Esophagus muscularis mucosa (tissue), 4 donors: ENCODE measurements at regions of chr2 and their contacts with region 1.

Region 1: DNA sequence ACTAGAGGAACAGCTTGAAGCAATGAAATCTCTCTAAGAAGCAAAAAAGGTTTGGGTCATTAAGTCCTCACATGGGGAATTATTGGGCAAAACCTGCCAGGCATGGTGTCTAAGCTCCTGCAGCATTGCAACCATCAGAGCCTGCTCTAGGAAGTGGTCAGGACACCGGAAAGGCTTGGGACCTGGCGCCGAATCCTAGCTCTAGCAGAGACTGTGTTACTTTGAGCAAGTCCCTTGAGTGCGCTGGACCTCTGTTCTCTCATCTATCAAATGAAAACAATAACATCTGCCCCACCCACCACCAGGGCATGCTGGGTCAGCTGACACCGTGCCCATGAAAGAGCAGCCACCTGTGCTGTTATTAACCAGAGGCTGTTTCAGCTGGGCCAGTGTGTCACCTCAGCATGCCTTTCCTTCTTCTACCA is 6.3 kb downstream of the TMEM127 start:
- DNase-seq: no peak
- H3K4me3 ChIP-seq: peak overlapping the region in 1 of 4 donors; percentile 15
- H3K27ac ChIP-seq: peak overlapping the region; percentile 79 to 85 (median 81)
- H3K4me1 ChIP-seq: peaks cover 91 to 99% (median 92%) of the 10 kb centered on the region in 4 donors
- H3K27me3 ChIP-seq: no peaks in the 10 kb centered on the region
- CTCF ChIP-seq: no peak
- EP300 ChIP-seq: no peak
- POLR2A ChIP-seq: no peak

Region 2: DNA sequence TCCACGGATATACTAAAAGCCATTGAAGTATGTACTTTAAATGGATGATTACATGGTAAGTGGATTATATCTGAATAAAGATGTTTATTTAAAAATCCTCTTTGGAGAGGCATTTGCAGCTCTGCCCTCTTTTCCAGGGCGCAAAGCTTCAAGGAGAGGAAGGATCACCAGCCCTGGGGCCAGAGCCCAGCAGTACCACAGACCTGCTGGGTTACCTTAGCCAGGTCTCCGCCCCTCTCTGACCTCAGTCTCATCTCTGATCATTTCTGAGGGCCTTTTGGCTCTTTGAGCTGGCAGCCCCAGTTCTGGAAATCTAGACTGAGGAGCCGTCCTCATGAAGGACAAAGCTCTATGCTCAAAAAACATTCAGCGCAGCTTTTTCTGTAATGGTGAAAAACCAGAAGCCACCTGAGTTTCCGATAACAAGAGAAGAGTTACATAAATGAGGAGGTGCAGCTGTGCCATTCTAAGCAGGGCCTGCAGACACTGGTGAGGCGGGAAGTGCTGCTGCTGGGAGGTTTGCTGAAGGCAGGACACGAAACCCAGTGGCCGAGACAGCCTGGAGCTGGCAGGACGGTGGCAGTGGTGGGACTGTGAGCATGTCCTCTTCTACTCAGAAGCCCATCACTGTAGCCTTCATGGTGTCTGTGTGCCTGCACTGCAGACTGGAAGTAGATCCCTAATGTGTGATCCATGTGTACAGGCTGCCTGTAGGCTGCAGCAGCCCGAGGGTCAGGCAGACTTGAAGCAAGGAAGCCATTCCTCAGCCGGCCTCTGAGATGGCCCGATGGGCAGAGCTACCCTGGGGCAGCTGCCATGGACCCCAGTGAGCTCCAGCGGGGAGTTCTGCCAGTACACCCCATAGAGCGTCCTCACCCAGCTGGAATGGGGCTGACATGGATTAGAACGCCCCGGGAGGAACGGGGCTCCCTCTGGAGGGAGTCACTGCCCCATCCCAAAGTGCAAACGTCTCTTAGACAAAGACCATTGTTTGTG is 170.9 kb before region 1 on chr2:
- intact Hi-C with region 1: no loop called
- DNase-seq: peak; percentile 77
- H3K4me3 ChIP-seq: no peak overlapping the region
- H3K27ac ChIP-seq: no peak overlapping the region
- H3K4me1 ChIP-seq: peaks cover 0 to 21% (median 9%) of the 10 kb centered on the region in 4 donors
- H3K27me3 ChIP-seq: peaks cover 0 to 23% (median 0%) of the 10 kb centered on the region in 4 donors
- CTCF ChIP-seq: no peak
- EP300 ChIP-seq: no peak
- POLR2A ChIP-seq: no peak

Region 3: DNA sequence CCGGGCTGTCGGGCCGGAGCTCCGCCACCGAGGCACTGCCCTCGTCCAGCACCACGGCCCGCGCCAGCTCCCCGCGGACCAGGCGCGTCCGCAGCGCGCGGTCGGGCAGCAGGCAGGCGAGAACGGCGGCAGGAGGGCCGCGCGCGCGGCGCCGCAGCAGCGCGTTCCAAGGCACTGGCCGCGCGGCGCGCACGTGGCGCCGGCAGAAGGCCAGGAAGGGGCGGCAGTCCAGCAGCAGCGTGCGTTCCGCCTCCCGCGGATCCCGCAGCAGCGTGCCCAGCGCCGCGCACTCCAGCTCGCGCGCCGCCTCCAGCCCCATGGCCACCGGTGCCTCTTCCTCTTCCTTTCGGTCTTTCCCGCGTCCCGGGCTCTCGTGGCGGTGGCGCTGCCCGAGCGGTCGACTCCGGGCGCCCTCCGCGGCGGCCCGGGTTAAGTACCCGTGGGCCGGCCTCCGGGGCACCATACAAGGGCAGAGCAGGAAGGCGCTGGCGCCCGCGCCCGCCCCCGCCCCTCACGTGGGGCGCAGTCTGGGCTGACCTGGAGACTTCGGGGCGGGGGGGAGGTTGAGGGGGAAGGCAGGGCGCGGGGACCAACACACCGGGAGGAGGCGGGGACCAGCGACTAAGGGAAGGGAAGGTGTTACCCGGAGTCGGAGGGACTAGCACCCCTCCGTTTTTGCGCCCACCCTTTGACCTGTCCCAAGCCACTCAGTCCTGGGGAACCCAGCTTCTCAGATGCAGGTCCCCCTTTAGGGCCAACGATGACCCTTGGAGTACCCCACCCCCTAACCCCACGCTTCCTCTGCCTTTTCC is 114.3 kb before region 1 on chr2 and contains the start of gene DUSP2:
- intact Hi-C with region 1: loop called (anchors 5 kb)
- DNase-seq: peak; percentile 95
- H3K4me3 ChIP-seq: peak within 1 kb of the TSS; percentile 62 to 70 (median 68)
- H3K27ac ChIP-seq: peak within 1 kb of the TSS; percentile 47 to 75 (median 58)
- H3K4me1 ChIP-seq: peaks cover 25 to 50% (median 48%) of the 10 kb centered on the region in 4 donors
- H3K27me3 ChIP-seq: no peaks in the 10 kb centered on the region
- CTCF ChIP-seq: no peak
- EP300 ChIP-seq: no peak
- POLR2A ChIP-seq: no peak
- total RNA-seq, gene DUSP2: 1.1 to 5.5 (median 1.7) TPM